ENCODE measurements at regions of chr7 and their contacts with region 1.

Region 1: DNA sequence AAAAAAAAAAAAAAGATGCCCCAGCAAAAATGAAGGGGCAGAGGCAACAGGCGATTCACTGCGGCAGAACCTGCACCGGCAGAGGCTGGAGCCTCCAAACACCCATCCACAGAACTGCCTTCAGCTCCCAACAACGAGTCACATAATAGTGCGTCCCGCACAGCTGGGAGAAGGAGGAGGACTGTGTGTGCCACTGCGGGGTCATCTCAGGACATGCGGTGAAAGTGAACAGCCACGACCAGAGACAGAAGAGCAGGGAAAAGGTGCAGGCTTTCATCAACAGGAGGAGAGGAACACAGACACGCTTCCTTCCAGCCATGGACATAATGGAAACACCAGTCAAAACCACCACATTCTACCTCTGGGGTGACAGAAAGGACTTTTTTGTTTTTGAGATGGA is 34.1 kb downstream of the DAGLB start:
- DNase-seq: no peak
- H3K4me3 ChIP-seq: no peak overlapping the region
- H3K27ac ChIP-seq: no peak overlapping the region
- H3K4me1 ChIP-seq: no peaks in the 10 kb centered on the region
- H3K27me3 ChIP-seq: no peaks in the 10 kb centered on the region
- CTCF ChIP-seq: no peak
- POLR2A ChIP-seq: no peak

Region 2: DNA sequence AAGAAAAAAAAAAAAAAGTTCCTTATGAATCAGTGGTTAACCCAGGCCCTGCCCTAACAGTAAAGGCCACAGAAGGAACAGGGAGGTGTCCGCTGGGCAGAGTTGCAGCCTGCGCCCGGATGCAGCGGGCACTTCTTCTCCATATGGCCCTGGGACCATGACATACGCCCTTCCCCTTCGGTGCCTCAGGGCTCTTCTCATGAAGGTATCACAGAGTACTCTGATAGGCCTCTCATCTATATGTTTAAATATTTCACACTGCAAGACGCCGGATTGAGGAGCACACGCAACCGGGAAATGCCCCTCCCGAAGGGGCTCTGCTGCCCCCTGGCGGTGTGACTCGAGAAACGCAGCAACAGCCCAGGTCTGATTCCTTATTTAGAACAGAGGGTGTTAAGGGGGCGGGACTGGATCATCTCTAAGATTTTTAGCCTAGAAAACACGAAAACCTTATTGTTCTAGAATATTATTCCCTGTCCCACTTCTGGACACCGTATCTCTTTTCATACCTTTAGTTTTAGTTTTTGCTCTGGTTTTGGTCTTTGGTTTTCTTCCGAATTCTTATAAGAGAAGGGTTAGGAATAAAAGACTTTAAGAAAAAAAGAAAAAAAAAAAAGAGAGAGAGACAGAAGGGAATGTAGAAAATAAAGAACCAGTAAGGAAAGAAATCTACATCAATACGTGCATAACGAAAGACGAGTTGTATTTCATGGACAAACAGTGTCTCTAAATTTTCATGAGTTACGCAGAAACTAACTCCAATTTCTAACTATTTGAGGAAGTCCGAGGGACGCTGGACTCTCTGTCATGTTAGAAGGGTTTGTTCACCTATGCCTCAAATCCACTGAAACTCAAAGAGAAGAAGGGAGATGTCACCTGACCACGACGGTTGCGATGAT is 22.1 kb after region 1 on chr7:
- CTCF ChIA-PET with region 1: no interaction called
- POLR2A ChIA-PET with region 1: no interaction called
- dilution Hi-C with region 1: no loop called
- intact Hi-C with region 1: loop called (anchors 2 kb)
- DNase-seq: peak; percentile 84
- H3K4me3 ChIP-seq: no peak overlapping the region
- H3K27ac ChIP-seq: no peak overlapping the region
- H3K4me1 ChIP-seq: peaks cover 11% of the 10 kb centered on the region
- H3K27me3 ChIP-seq: no peaks in the 10 kb centered on the region
- CTCF ChIP-seq: peak; percentile 93 to 95
- POLR2A ChIP-seq: no peak

Measured in endothelial cell of umbilical vein (primary cell).